ENCODE measurements at regions of chr10 and their contacts with region 1.

Region 1: GRCh38 chr10:79347226-79347893 is at the start of gene PPIF:
- DNase-seq: peak; percentile 97
- ATAC-seq: peak; percentile 88
- H3K4me3 Mint-ChIP-seq: peak within 1 kb of the TSS; percentile 85
- H3K27ac Mint-ChIP-seq: peak within 1 kb of the TSS; percentile 93
- H3K4me1 Mint-ChIP-seq: peaks cover 22% of the 10 kb centered on the region
- H3K27me3 Mint-ChIP-seq: no peaks in the 10 kb centered on the region
- total RNA-seq, gene PPIF: 92.3 to 96.1 TPM

Region 2: DNA sequence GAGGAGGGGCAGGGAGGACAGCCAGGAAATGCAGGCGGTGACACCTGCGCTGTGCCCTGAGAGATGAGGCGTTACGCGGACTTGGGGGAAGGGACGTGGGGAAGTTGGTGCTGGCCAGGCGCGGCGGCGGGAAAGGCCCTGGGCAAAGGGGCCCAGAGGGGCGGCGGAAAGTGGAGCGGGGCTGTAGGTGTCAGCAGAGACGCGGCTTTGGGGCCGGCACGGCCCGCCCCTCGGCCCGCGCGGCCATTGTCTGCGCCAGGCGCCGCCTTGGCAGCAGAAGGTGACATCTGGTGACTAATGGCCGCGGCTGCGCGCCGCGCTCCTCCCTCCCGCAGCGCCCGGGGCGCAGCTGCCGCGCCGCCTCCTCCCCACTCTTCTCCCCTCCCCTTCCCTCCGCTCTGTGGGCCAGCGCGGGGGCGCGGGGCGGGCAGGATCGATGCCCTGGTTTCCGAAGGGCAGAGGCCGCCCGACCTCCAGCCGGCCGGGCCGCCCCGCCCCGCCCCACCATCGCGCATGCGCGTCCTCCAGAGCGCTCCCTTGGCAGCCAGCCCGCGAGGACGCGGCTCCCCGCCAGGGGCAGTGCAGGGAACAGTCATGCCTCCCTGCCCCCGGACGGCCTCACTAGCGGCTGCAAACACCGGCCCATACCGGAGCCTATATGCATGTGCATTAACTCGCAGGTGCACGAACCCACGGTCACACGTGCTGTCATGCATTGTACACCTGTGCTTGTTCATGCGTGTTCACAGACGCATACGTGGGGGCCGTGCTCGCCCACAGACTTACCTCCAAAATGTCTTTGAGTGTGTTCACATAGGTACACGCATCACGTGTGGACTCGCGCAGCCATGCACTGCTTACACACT is 1044.1 kb before region 1 on chr10:
- CTCF ChIA-PET with region 1: no interaction called
- POLR2A ChIA-PET with region 1: no interaction called
- intact Hi-C with region 1: loop called in 1 of 2 experiments (anchors 10 kb)
- DNase-seq: peak; percentile 98
- ATAC-seq: peak; percentile 94
- H3K4me3 Mint-ChIP-seq: peak overlapping the region; percentile 79
- H3K27ac Mint-ChIP-seq: peak overlapping the region; percentile 90
- H3K4me1 Mint-ChIP-seq: peaks cover 12% of the 10 kb centered on the region
- H3K27me3 Mint-ChIP-seq: no peaks in the 10 kb centered on the region

Region 3: GRCh38 chr10:79068562-79069324 is 278.6 kb before region 1 on chr10 and contains the start of gene ZMIZ1:
- CTCF ChIA-PET with region 1: no interaction called
- POLR2A ChIA-PET with region 1: no interaction called
- intact Hi-C with region 1: loop called in 1 of 2 experiments (anchors 2 kb)
- DNase-seq: peak; percentile 89
- ATAC-seq: peak; percentile 72
- H3K4me3 Mint-ChIP-seq: peak within 1 kb of the TSS; percentile 73
- H3K27ac Mint-ChIP-seq: peak within 1 kb of the TSS; percentile 58
- H3K4me1 Mint-ChIP-seq: peaks cover 32% of the 10 kb centered on the region
- H3K27me3 Mint-ChIP-seq: peaks cover 3% of the 10 kb centered on the region
- total RNA-seq, gene ZMIZ1: 33.9 to 34.3 TPM

Region 4: GRCh38 chr10:79286318-79286951 is 60.9 kb before region 1 on chr10:
- CTCF ChIA-PET with region 1: interaction called, 4 read pairs
- POLR2A ChIA-PET with region 1: no interaction called
- intact Hi-C with region 1: loop called in 1 of 2 experiments (anchors 2 kb)
- DNase-seq: peak; percentile 92
- ATAC-seq: peak; percentile 88
- H3K4me3 Mint-ChIP-seq: peak overlapping the region; percentile 37
- H3K27ac Mint-ChIP-seq: peak overlapping the region; percentile 85
- H3K4me1 Mint-ChIP-seq: peaks cover 41% of the 10 kb centered on the region
- H3K27me3 Mint-ChIP-seq: no peaks in the 10 kb centered on the region

Region 5: DNA sequence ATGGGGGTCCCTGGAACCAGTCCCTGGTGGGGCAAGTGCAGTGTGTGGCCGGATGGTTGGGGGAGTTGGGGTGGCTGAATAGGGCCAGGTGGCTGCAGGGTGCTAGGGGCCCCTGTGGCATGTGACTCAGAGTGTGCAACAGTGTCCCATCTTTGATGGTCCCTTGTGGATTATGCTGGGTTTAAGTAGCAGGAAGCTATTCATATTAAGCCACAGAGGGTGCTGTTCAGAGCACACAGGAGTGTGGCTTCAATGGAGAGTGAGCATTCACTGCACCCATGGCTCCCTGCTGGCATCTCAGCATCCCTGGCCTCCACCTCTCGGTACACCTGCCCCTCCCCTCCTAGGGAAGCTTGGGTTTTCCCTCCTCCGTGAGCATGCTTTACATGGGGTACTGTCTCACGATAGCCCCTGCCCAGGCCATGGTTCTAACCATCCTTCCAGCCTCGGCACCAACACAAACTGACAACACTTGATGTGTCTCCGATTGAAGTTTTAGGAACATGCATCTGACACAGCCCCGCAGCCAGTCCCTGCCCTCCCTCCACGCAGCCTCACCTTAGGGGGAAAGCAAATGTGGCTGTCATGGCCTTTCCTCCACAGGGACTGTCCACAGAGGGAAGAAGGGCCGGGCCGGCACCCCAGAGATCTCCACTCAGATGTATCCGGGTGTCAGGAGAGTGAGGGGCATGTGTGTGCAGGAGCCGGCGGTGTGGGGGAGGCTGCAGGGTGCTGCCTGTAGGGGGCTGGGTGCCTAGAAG is 30.5 kb before region 1 on chr10:
- CTCF ChIA-PET with region 1: interaction called, 3 read pairs
- POLR2A ChIA-PET with region 1: no interaction called
- intact Hi-C with region 1: loop called in 1 of 2 experiments (anchors 1 kb)
- DNase-seq: peak; percentile 51
- ATAC-seq: peak; percentile 55
- H3K4me3 Mint-ChIP-seq: peak overlapping the region; percentile 49
- H3K27ac Mint-ChIP-seq: peak overlapping the region; percentile 44
- H3K4me1 Mint-ChIP-seq: peaks cover 61% of the 10 kb centered on the region
- H3K27me3 Mint-ChIP-seq: no peaks in the 10 kb centered on the region

Region 6: GRCh38 chr10:79331709-79332108 is 15.7 kb before region 1 on chr10:
- CTCF ChIA-PET with region 1: interaction called, 50 read pairs
- POLR2A ChIA-PET with region 1: interaction called, 7 read pairs
- intact Hi-C with region 1: loop called (anchors 1 kb)
- DNase-seq: peak; percentile 93
- ATAC-seq: peak; percentile 98
- H3K4me3 Mint-ChIP-seq: peak overlapping the region; percentile 9
- H3K27ac Mint-ChIP-seq: peak overlapping the region; percentile 90
- H3K4me1 Mint-ChIP-seq: peaks cover 40% of the 10 kb centered on the region
- H3K27me3 Mint-ChIP-seq: no peaks in the 10 kb centered on the region

Region 7: GRCh38 chr10:80078448-80079311 is 731.3 kb after region 1 on chr10 and contains the start of gene TMEM254:
- CTCF ChIA-PET with region 1: no interaction called
- POLR2A ChIA-PET with region 1: no interaction called
- intact Hi-C with region 1: loop called in 1 of 2 experiments (anchors 10 kb)
- DNase-seq: peak; percentile 95
- ATAC-seq: peak; percentile 74
- H3K4me3 Mint-ChIP-seq: peak within 1 kb of the TSS; percentile 93
- H3K27ac Mint-ChIP-seq: peak within 1 kb of the TSS; percentile 96
- H3K4me1 Mint-ChIP-seq: peaks cover 32% of the 10 kb centered on the region
- H3K27me3 Mint-ChIP-seq: no peaks in the 10 kb centered on the region
- total RNA-seq, gene TMEM254: 11.3 to 15.2 TPM